A549 (cell line): ENCODE measurements at regions of chr19 and their contacts with region 1.

Region 1: GRCh38 chr19:29610563-29611271 is 4.6 kb downstream of the POP4 start:
- DNase-seq: peak; percentile 89 to 96
- ATAC-seq: peak; percentile 77 to 90
- H3K4me3 ChIP-seq: no peak overlapping the region
- H3K27ac ChIP-seq: no peak overlapping the region
- H3K4me1 ChIP-seq: peaks cover 7% of the 10 kb centered on the region; the same call in 1 of the 3 replicates
- CTCF ChIP-seq: peak; percentile 98
- EP300 ChIP-seq: no peak
- POLR2A ChIP-seq: no peak
- RAD21 ChIP-seq: peak; percentile 91 to 98

Region 2: DNA sequence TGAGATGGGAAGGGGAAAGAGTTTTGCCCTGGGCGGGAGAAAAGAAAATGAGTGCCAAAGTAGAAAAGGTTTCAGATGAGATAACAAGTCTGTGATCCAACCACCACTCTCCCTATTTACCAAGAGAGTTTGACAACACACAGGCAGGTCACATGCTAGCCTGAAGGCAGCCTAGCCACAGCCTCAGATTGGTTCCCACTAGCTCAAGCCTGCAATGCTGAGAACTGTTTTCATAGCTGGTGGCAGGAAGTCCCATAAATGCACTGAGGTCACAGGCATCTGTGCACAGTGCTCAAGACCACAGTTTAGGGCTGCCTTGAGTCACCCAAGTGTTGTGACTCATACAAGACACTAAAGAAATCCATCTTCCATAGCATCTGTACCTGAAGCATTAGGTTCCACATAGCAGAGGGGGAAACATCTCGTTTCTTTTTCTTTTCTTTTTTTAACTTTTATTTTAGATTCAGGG is 23.2 kb before region 1 on chr19:
- CTCF ChIA-PET with region 1: interaction called, 141 read pairs
- POLR2A ChIA-PET with region 1: interaction called, 14 read pairs
- DNase-seq: no peak
- ATAC-seq: no peak
- H3K4me3 ChIP-seq: no peak overlapping the region
- H3K27ac ChIP-seq: no peak overlapping the region
- H3K4me1 ChIP-seq: no peaks in the 10 kb centered on the region
- CTCF ChIP-seq: no peak
- EP300 ChIP-seq: no peak
- POLR2A ChIP-seq: no peak
- RAD21 ChIP-seq: no peak

Region 3: GRCh38 chr19:29639086-29639485 is 28.4 kb after region 1 on chr19:
- CTCF ChIA-PET with region 1: interaction called, 12 read pairs
- POLR2A ChIA-PET with region 1: interaction called, 5 read pairs
- DNase-seq: no peak
- ATAC-seq: no peak
- H3K4me3 ChIP-seq: no peak overlapping the region
- H3K27ac ChIP-seq: no peak overlapping the region
- H3K4me1 ChIP-seq: no peaks in the 10 kb centered on the region
- CTCF ChIP-seq: no peak
- EP300 ChIP-seq: no peak
- POLR2A ChIP-seq: no peak
- RAD21 ChIP-seq: no peak

Region 4: DNA sequence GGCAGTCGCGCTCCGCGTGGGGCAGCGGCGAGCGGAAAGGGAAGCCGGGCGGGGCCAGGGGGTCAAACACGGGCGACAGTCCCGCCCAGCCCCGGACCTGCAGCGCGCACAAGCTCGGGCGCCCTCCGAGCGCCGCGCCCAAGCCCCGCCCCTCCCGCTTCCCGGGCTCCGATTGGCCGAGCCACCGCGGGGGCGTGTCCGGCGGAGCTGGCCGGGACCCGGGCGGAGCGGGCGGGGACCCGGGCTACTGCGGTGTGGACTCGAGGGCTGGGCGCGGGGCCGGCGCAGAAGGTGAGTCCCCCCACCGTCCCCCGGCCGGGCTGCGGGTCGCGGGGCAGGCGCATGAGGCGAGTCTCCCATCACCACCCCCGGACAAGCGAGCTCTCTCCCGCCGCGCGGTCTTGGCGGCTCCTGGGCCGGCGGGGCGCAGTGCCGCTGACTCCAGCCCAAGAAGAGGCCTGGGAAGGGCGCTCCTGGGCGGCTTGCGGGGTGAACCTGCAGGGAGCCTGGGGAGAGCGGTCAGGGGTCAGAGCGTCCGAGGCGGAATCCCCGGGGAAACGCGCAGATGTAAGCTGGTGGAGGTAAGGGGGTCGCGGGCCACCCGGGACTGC is 54.6 kb after region 1 on chr19 and contains the start of gene PLEKHF1:
- CTCF ChIA-PET with region 1: interaction called, 122 read pairs
- POLR2A ChIA-PET with region 1: interaction called, 51 read pairs
- DNase-seq: peak; percentile 85 to 98
- ATAC-seq: peak; percentile 87 to 97
- H3K4me3 ChIP-seq: peak within 1 kb of the TSS; percentile 82
- H3K27ac ChIP-seq: peak within 1 kb of the TSS; percentile 74 to 86
- H3K4me1 ChIP-seq: peaks cover 19% of the 10 kb centered on the region
- CTCF ChIP-seq: no peak
- EP300 ChIP-seq: no peak
- POLR2A ChIP-seq: peak; percentile 35; the same call in 1 of the 2 replicates
- RAD21 ChIP-seq: no peak
- polyA plus RNA-seq, gene PLEKHF1: 2.1 and 2.3 TPM in 2 replicates

Region 5: GRCh38 chr19:29694669-29695627 is 84.2 kb after region 1 on chr19:
- CTCF ChIA-PET with region 1: interaction called, 36 read pairs
- POLR2A ChIA-PET with region 1: interaction called, 4 read pairs
- DNase-seq: peak; percentile 84 to 85
- ATAC-seq: peak; percentile 96 to 99
- H3K4me3 ChIP-seq: no peak overlapping the region
- H3K27ac ChIP-seq: no peak overlapping the region
- H3K4me1 ChIP-seq: no peaks in the 10 kb centered on the region
- CTCF ChIP-seq: peak; percentile 81
- EP300 ChIP-seq: no peak
- POLR2A ChIP-seq: no peak
- RAD21 ChIP-seq: peak; percentile 58 to 68

Region 6: DNA sequence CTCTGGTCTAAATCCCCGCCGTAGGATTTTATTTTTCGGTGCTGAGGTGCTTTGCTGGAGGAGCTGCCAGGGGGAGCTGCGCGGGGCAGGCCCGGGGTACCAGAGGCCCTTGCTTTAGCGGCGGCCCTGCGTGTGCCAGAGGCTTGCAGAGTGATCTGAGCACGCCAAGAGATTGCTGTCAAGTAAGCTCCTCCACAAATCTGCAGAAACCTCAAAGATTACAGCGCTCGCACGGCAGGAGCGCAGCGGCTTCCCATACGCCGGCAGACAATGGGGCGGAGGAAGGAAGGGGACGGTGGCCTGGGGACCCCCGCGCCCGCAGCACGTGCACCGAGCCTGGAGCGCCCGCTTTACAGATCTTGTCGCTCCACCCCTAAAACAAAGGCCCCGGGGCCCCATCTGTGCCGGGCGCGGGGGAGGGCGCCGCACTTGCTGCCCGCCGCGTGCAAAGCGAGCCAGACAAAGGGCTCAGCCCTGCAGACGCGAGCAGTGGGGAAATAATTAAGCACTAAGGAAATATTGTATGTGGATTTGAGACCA is 113.5 kb after region 1 on chr19:
- CTCF ChIA-PET with region 1: interaction called, 490 read pairs
- POLR2A ChIA-PET with region 1: no interaction called
- DNase-seq: no peak
- ATAC-seq: no peak
- H3K4me3 ChIP-seq: no peak overlapping the region
- H3K27ac ChIP-seq: no peak overlapping the region
- H3K4me1 ChIP-seq: no peaks in the 10 kb centered on the region
- CTCF ChIP-seq: no peak
- EP300 ChIP-seq: no peak
- POLR2A ChIP-seq: no peak
- RAD21 ChIP-seq: no peak